Right ventricle myocardium inferior (tissue), 1 donor: ENCODE measurements at regions of chr12 and their contacts with region 1.

Region 1: GRCh38 chr12:12890815-12891645 is at the start of gene GPRC5A:
- DNase-seq: peak; percentile 89
- ATAC-seq: peak; percentile 97
- total RNA-seq, gene GPRC5A: 1.7 TPM

Region 2: DNA sequence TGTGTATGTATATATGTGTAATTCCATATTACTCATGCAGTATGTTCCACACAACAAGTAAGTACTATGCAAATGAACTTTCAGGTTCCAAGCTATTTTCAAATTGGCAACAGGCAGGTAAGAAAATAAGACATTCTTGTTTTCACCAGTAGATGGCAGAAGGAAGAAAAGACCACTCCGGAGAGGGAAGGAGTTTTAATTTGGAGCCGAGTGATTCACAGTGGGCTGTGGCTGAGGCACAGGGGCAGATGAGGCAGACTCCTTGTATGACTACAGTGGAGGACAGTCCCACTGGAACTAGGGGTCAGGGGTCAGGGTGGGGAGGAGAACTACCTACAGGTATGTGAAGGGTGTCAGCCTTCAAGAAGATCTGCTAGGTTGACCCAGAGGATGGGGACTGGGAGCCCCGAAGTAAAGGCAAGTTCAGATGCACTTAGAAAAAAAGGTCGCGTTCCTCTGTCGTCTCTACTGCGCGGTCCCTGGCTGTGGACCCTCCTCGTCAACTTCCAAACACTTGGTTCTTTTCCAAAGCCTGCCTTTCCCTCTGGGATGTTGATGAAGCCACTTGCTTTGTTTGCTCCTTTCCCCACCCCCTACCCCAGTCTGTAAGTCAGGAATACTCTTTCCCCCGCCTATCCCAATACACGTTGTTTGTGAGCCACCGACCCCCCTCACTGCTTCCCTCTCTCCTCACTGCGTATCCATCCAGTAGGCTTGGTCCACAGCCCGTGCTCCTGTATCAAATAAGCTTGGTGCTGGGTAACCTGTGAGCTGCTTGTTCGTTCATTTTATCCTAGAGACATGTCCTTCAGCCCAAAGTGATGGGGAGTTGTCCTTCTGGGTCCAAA is 53.8 kb before region 1 on chr12:
- intact Hi-C with region 1: loop called (anchors 10 kb)
- DNase-seq: no peak
- ATAC-seq: peak; percentile 44

Region 3: DNA sequence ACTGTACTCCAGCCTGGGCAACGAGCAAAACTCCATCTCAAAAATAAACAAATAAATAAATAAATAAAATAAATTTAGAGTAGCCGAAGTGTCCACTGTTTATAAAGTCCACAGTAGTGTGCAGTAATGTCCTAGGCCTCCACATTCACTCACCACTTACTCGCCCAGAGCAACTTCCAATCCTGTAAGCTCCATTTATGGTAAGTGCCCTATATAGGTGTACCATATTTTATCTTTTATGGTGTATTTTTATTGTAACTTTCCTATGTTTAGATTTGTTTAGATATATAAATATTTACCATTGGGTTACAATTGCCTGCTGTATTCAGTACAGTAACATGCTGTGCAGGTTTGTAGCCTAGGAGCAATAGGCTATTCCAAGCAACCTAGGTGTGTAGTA is 37.6 kb before region 1 on chr12:
- intact Hi-C with region 1: no loop called
- DNase-seq: no peak
- ATAC-seq: no peak